Activated naive CD4-positive, alpha-beta T cell treated with anti-CD3 and anti-CD28 coated beads for 36 hours (primary cell): ENCODE measurements at regions of chr11 and their contacts with region 1.

Region 1: DNA sequence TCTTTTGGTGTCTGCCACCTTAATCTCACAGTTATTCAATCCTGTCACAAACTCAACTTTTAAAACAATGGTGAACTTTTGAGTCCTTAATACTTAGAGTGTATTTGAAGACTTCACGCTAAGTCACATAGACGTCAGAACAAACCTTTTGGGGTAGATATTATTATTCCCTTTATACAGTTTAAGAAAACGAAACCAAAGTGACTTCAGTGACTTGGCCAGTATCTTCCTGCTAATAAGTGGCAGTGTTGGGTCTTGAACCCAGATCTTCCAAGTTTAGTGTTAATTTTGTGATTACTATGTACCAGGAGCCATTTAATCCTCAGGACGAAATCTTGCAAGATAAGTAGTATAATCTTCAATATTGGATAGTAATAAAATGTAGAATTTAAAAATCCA is 694 bp downstream of the CEP295 start:
- DNase-seq: no peak
- H3K4me3 Mint-ChIP-seq: peak overlapping the region; percentile 84
- H3K27ac Mint-ChIP-seq: peak overlapping the region; percentile 93
- H3K4me1 Mint-ChIP-seq: peaks cover 43% of the 10 kb centered on the region
- H3K27me3 Mint-ChIP-seq: no peaks in the 10 kb centered on the region

Region 2: GRCh38 chr11:93645938-93646337 is 16.2 kb before region 1 on chr11:
- CTCF ChIA-PET with region 1: interaction called, 4 read pairs
- intact Hi-C with region 1: loop called (anchors 1 kb)
- DNase-seq: no peak
- H3K4me3 Mint-ChIP-seq: no peak overlapping the region
- H3K27ac Mint-ChIP-seq: no peak overlapping the region
- H3K4me1 Mint-ChIP-seq: peaks cover 21% of the 10 kb centered on the region
- H3K27me3 Mint-ChIP-seq: no peaks in the 10 kb centered on the region

Region 3: DNA sequence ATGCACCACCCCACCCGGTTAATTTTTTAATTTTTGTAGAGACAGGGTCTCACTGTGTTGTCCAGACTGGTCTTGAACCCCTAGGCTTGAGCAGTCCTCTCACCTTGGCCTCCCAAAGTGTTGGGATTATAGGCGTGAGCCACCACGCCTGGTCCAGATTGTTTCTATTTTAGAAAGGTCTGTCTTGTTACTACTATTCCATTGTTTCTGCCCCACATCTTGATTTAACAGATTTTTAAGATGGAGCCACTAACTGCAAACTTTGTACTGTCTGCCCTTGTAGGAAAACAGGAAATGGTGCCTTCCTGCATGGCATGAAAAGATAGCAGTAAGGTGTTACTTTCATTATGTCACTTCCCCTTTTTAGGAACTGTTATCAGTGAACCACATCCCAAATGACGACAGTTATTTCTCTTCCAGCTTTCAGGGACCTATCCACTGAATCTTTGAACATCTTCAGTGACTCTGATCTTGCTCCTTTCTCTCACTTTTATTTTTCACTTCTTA is 55.9 kb after region 1 on chr11:
- CTCF ChIA-PET with region 1: no interaction called
- intact Hi-C with region 1: no loop called
- DNase-seq: no peak
- H3K4me3 Mint-ChIP-seq: no peak overlapping the region
- H3K27ac Mint-ChIP-seq: peak overlapping the region; percentile 69
- H3K4me1 Mint-ChIP-seq: peaks cover 21% of the 10 kb centered on the region
- H3K27me3 Mint-ChIP-seq: no peaks in the 10 kb centered on the region

Region 4: GRCh38 chr11:94493281-94494125 is 831.3 kb after region 1 on chr11 and contains the starts of genes ANKRD49 and MRE11:
- CTCF ChIA-PET with region 1: no interaction called
- intact Hi-C with region 1: loop called (anchors 5 kb)
- DNase-seq: peak; percentile 97
- H3K4me3 Mint-ChIP-seq: peak within 1 kb of the TSS; percentile 93
- H3K27ac Mint-ChIP-seq: peak within 1 kb of the TSS; percentile 95
- H3K4me1 Mint-ChIP-seq: peaks cover 25% of the 10 kb centered on the region
- H3K27me3 Mint-ChIP-seq: no peaks in the 10 kb centered on the region
- total RNA-seq, gene ANKRD49: 16.3 to 19.1 TPM
- total RNA-seq, gene MRE11: 33.1 to 37.3 TPM